Right ventricle myocardium superior (tissue), 1 donor: ENCODE measurements at regions of chr21 and their contacts with region 1.

Region 1: GRCh38 chr21:33199516-33200217 is 30.1 kb upstream of the IFNAR2 start:
- DNase-seq: peak; percentile 56
- ATAC-seq: peak; percentile 81

Region 2: GRCh38 chr21:32934829-32935228 is 264.8 kb before region 1 on chr21:
- intact Hi-C with region 1: loop called (anchors 5 kb)
- DNase-seq: no peak
- ATAC-seq: no peak

Region 3: DNA sequence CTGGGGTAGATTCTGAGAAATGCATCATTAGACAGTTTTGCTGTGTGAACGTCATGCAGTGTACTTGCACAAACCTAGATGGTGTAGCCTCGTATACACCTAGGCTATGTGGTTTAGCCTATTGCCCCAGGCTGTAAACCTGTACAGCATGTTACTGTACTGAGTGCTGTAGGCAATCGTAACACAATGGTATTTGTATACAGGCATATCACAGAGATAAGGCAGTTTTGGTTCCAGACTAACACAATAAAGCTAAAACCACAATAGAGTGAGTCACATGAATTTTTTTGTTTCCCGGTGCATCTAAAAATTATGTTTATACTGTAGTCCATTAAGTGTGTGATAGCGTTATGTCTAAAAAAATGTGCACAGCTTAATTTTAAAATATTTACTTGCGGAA is 73.4 kb after region 1 on chr21:
- intact Hi-C with region 1: no loop called
- DNase-seq: no peak
- ATAC-seq: no peak

Region 4: DNA sequence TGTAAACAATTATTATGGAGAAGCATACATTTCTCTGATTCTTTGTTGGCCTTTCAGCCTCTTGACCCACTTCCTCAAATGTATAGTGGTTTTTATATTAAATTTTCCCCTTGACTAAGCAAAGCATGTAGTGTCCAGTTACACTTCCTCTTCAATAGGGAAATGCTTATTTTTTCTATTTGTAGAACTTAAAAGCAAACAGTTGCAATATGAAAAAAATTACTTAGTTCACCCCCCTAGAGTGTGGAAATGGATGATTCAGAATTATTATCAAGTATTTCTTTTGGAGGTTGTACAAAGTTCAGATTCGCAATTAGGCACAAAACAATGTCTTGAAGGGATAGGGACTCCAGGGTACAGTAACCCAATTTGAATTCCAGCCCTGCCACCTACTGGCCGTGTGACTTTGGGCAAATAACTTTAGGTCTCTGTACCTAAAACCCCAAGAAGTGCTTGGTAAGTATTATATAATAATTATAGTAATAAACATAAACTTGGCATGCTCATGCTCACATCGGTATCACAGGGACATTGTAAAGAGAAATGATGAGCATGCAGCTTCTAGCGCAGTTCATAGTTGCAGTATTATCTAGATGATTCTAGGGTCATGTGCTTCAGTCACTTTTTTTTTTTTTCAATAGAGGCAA is 174.9 kb after region 1 on chr21:
- intact Hi-C with region 1: loop called (anchors 5 kb)
- DNase-seq: peak; percentile 68
- ATAC-seq: peak; percentile 79

Region 5: GRCh38 chr21:33441489-33442477 is 242.1 kb after region 1 on chr21:
- intact Hi-C with region 1: loop called (anchors 10 kb)
- DNase-seq: peak; percentile 61
- ATAC-seq: peak; percentile 57